ENCODE measurements at regions of chr15 and their contacts with region 1.

Region 1: GRCh38 chr15:73081321-73081958 is 29.2 kb downstream of the NEO1 start:
- DNase-seq: no peak
- H3K4me3 ChIP-seq: no peak overlapping the region
- H3K27ac ChIP-seq: no peak overlapping the region
- H3K4me1 ChIP-seq: peaks cover 4 to 13% (median 7%) of the 10 kb centered on the region in 3 donors
- H3K27me3 ChIP-seq: peaks cover 0 to 5% (median 0%) of the 10 kb centered on the region in 4 donors
- CTCF ChIP-seq: peak; percentile 41 to 79 (median 62)
- POLR2A ChIP-seq: no peak

Region 2: GRCh38 chr15:72722071-72722696 is 359.3 kb before region 1 on chr15:
- intact Hi-C with region 1: loop called (anchors 10 kb)
- DNase-seq: no peak
- H3K4me3 ChIP-seq: no peak overlapping the region
- H3K27ac ChIP-seq: no peak overlapping the region
- H3K4me1 ChIP-seq: no peaks in the 10 kb centered on the region
- H3K27me3 ChIP-seq: no peaks in the 10 kb centered on the region
- CTCF ChIP-seq: peak; percentile 27 to 65 (median 60)
- POLR2A ChIP-seq: no peak

Region 3: DNA sequence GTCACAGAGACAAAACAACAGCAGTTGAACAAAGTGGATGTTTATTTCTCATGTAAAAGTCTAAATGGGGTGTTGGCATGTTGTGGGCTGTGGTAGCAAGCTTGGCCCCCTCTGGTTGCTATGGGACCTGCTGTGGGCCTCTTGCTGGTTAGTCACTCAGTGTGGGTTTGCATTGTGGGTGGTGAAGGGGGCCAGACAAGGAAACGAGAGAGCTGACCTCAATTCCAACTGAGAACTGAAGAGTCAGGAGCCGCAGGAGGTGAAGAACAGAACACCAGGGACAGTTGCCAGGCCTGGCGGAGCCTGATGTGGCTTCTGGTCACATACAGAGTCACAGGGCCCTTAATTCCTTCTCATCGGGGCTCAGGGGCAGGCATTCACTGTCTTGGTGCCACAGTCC is 296.0 kb before region 1 on chr15:
- intact Hi-C with region 1: loop called (anchors 5 kb)
- DNase-seq: no peak
- H3K4me3 ChIP-seq: no peak overlapping the region
- H3K27ac ChIP-seq: peak overlapping the region in 3 of 4 donors; percentile 13 to 97 (median 92)
- H3K4me1 ChIP-seq: peaks cover 12 to 33% (median 20%) of the 10 kb centered on the region in 3 donors
- H3K27me3 ChIP-seq: no peaks in the 10 kb centered on the region
- CTCF ChIP-seq: no peak
- POLR2A ChIP-seq: no peak

Measured in esophagus squamous epithelium (tissue), 5 donors.